ENCODE measurements at regions of chr5 and their contacts with region 1.

Region 1: GRCh38 chr5:88785391-88786219 is 97.4 kb downstream of the MEF2C start:
- DNase-seq: peak; percentile 68 to 93
- H3K4me3 ChIP-seq: peak overlapping the region; percentile 28; the same call in 1 of the 2 replicates
- H3K27ac ChIP-seq: peak overlapping the region; percentile 96
- H3K4me1 ChIP-seq: peaks cover 32% of the 10 kb centered on the region
- H3K27me3 ChIP-seq: no peaks in the 10 kb centered on the region
- CTCF ChIP-seq: no peak

Region 2: DNA sequence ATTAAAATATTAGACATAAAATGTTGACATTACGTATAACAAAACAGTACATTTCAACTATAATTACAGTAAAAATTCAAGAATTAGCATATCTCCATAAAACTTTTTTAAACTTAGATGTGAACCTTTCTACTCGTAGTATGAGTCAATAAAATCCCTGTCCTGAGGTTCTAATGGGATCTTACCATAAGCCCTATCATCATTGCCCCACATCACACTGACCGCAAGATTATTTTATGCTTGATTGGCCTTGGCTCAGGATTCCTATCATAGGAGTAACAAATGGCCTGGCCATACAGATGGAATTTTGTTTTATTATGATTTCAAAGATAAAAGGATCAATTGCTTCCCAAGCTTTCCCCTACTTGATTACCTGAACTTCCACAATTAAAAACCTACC is 140.9 kb before region 1 on chr5:
- CTCF ChIA-PET with region 1: no interaction called
- POLR2A ChIA-PET with region 1: no interaction called
- intact Hi-C with region 1: no loop called
- DNase-seq: no peak
- H3K4me3 ChIP-seq: no peak overlapping the region
- H3K27ac ChIP-seq: no peak overlapping the region
- H3K4me1 ChIP-seq: no peaks in the 10 kb centered on the region
- H3K27me3 ChIP-seq: no peaks in the 10 kb centered on the region
- CTCF ChIP-seq: no peak

Region 3: GRCh38 chr5:88743231-88743879 is 42.2 kb before region 1 on chr5:
- CTCF ChIA-PET with region 1: no interaction called
- POLR2A ChIA-PET with region 1: no interaction called
- intact Hi-C with region 1: loop called (anchors 1 kb)
- DNase-seq: peak in 1 of 2 experiments; percentile 64
- H3K4me3 ChIP-seq: no peak overlapping the region
- H3K27ac ChIP-seq: peak overlapping the region; percentile 34; the same call in 1 of the 2 replicates
- H3K4me1 ChIP-seq: peaks cover 9% of the 10 kb centered on the region; the same call in 1 of the 2 replicates
- H3K27me3 ChIP-seq: no peaks in the 10 kb centered on the region
- CTCF ChIP-seq: no peak

Region 4: DNA sequence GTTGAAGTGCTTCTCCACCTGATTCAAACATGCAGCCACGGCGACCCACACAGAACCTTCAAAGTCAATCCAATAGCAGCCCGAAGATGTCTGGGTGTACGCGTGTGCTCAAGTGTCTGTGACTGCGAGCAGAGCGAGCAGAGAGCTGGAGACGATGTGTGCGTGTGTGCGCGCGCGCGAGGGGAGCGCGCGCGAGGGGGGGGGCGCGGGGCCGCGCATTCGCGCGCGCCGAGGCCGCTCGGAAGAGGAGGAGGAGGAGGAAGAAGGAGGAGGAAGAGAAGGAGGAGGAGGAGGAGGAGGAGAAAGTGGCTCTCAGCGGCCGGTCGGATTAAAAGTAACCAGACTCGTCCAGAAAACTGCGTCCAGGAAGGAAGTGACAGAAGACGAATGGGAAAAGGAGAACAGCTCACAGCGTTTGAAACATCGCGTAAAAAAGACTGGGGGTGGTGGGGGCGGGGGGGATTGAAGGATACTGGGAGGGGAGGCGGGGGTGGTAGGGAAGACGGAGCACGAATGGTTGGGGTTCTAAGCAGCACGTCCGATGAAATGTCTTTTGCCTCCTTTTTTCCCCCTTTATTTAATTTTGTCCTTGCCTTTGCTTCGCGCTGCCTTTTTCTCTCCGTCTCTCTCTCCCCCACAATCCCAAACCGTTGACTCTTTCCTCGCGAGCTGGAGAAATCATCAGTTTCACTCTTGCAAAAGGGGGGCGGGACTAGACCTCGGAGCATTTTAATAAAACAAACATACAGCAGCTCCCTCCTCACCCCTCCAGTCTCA is 97.6 kb after region 1 on chr5 and contains the start of gene MEF2C:
- CTCF ChIA-PET with region 1: no interaction called
- POLR2A ChIA-PET with region 1: interaction called, 6 read pairs
- intact Hi-C with region 1: loop called (anchors 5 kb)
- DNase-seq: peak in 1 of 2 experiments; percentile 46
- H3K4me3 ChIP-seq: peak within 1 kb of the TSS; percentile 87
- H3K27ac ChIP-seq: 0 out of 2 replicates have a peak within 1 kb of the TSS, but pooled peaks have one; percentile 18
- H3K4me1 ChIP-seq: peaks cover 13% of the 10 kb centered on the region
- H3K27me3 ChIP-seq: no peaks in the 10 kb centered on the region
- CTCF ChIP-seq: no peak
- total RNA-seq, gene MEF2C: 1.6 and 2.5 TPM in 2 replicates

Region 5: GRCh38 chr5:89036704-89037489 is 251.3 kb after region 1 on chr5:
- CTCF ChIA-PET with region 1: no interaction called
- POLR2A ChIA-PET with region 1: no interaction called
- intact Hi-C with region 1: loop called (anchors 5 kb)
- DNase-seq: peak; percentile 50 to 68
- H3K4me3 ChIP-seq: no peak overlapping the region
- H3K27ac ChIP-seq: peak overlapping the region; percentile 59
- H3K4me1 ChIP-seq: peaks cover 15% of the 10 kb centered on the region
- H3K27me3 ChIP-seq: no peaks in the 10 kb centered on the region
- CTCF ChIP-seq: no peak